K562 (cell line): ENCODE measurements at regions of chr18 and their contacts with region 1.

Region 1: DNA sequence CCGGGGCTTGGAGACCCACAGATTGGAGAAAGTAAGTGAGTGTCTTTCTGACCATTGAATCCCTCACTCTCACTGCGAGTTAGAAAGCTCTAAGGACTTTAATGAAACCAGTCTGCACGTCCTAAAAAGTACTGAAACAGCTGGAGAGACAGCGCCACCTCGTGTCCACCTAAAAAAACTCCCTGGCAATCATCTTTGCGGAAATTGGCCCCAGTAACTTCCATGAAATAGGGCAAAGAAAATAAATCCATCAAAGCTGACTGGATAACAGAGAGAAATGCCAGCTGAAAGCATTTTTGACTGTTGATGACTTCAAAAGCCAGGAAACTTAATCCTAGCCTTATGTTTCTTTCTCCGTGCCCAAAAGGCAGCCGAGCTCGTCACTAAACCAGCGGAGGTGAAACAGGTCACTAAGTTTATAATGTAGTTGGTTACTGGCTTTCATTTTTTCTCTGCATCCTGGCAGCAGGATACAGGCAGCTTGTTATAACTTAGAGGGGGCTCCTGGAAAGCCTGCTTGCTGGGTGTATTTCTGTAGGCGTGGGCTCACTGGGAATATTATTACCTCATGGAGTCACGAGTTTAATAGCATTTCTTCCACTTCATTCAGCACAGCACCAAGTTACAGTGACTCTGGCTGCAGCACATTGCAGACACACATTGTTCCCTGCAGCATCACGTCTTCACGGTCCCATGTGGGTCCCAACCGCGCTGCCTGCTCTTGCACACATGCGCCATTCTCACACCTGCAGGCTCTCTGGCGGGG is 266.5 kb downstream of the HRH4 start:
- DNase-seq: peak; percentile 39 to 78 (median 45)
- ATAC-seq: peak; percentile 84
- H3K4me3 ChIP-seq: no peak overlapping the region
- H3K27ac ChIP-seq: no peak overlapping the region
- H3K4me1 ChIP-seq: no peaks in the 10 kb centered on the region
- H3K27me3 ChIP-seq: no peaks in the 10 kb centered on the region; a peak in 2 of 5 replicates
- CTCF ChIP-seq: peak; percentile 61 to 88 (median 85)
- EP300 ChIP-seq: no peak
- POLR2A ChIP-seq: no peak
- RAD21 ChIP-seq: peak; percentile 68 to 79

Region 2: DNA sequence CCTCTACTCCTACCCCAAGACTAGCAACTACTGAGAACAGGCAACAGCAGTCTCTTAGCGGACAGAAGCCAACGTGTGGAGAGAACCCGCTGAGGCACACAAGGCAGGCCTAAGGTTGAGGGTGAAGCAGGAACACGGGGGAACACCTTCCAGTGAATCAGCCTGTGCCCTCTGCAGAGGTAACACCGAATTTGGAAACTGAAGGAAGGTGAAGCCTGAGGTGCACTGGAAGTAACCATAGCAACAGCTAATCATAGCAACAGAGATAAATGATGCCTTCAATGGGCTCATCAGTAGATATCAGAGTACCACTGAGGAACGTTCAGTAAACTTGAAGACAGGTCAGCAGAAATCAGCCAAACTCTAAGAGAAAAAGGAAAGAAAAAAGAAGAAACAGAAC is 372.6 kb before region 1 on chr18:
- CTCF ChIA-PET with region 1: interaction called, 7 read pairs
- POLR2A ChIA-PET with region 1: no interaction called
- in situ Hi-C with region 1: loop called (anchors 10 kb)
- intact Hi-C with region 1: loop called (anchors 1 kb)
- DNase-seq: no peak
- ATAC-seq: no peak
- H3K4me3 ChIP-seq: no peak overlapping the region
- H3K27ac ChIP-seq: no peak overlapping the region
- H3K4me1 ChIP-seq: no peaks in the 10 kb centered on the region
- H3K27me3 ChIP-seq: no peaks in the 10 kb centered on the region
- CTCF ChIP-seq: no peak
- EP300 ChIP-seq: no peak
- POLR2A ChIP-seq: no peak
- RAD21 ChIP-seq: no peak

Region 3: GRCh38 chr18:24362758-24363157 is 364.2 kb before region 1 on chr18:
- CTCF ChIA-PET with region 1: interaction called, 7 read pairs
- POLR2A ChIA-PET with region 1: no interaction called
- in situ Hi-C with region 1: loop called (anchors 10 kb)
- intact Hi-C with region 1: loop called (anchors 1 kb)
- DNase-seq: no peak
- ATAC-seq: no peak
- H3K4me3 ChIP-seq: no peak overlapping the region
- H3K27ac ChIP-seq: no peak overlapping the region
- H3K4me1 ChIP-seq: no peaks in the 10 kb centered on the region
- H3K27me3 ChIP-seq: peaks cover 0 to 7% of the 10 kb centered on the region in 2 experiments; a peak in 1 of 5 replicates
- CTCF ChIP-seq: no peak
- EP300 ChIP-seq: no peak
- POLR2A ChIP-seq: no peak
- RAD21 ChIP-seq: no peak

Region 4: GRCh38 chr18:24488824-24489493 is 238.0 kb before region 1 on chr18:
- CTCF ChIA-PET with region 1: interaction called, 8 read pairs
- POLR2A ChIA-PET with region 1: no interaction called
- in situ Hi-C with region 1: no loop called
- intact Hi-C with region 1: loop called (anchors 1 kb)
- DNase-seq: peak; percentile 60 to 62 (median 62)
- ATAC-seq: peak; percentile 61
- H3K4me3 ChIP-seq: no peak overlapping the region
- H3K27ac ChIP-seq: no peak overlapping the region
- H3K4me1 ChIP-seq: no peaks in the 10 kb centered on the region
- H3K27me3 ChIP-seq: peaks cover 0 to 15% of the 10 kb centered on the region in 2 experiments; a peak in 1 of 5 replicates
- CTCF ChIP-seq: peak; percentile 55 to 87 (median 63); a peak in 4 of 6 replicates
- EP300 ChIP-seq: no peak
- POLR2A ChIP-seq: no peak
- RAD21 ChIP-seq: peak; percentile 63 to 79

Region 5: DNA sequence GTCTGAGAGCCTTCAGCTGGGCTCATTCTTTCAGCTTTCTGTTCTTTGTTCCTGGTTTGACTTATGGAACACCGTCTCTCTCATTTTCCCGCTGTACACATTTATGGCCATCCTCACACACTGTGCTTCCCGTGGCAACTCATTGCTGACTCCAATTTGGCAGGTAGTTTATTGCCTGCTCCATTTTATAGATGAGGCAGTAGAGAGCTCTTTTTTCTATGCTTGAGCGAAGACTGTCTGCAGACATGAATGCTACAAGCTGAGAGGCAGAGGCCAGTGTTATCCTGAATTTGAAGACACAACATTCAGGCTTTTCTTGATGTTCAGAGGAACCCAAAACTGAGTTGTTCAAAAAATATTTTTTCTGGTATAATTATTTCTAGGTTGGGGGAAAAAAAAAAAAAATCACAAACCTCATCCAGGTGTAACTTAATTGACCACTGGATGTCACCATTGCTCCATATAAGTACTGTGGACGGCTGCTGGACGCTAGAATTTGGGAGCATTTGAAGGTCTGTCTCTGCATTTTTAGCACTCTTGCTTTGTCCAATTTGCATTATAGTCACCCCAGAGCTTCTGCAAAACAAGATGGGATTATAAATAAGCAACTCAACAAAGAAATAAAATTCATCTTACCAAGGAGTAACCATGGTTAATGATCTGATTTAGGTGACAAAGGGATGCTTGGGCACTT is 183.0 kb before region 1 on chr18:
- CTCF ChIA-PET with region 1: interaction called, 5 read pairs
- POLR2A ChIA-PET with region 1: no interaction called
- in situ Hi-C with region 1: no loop called
- intact Hi-C with region 1: loop called (anchors 1 kb)
- DNase-seq: peak; percentile 40 to 49 (median 44)
- ATAC-seq: peak; percentile 68
- H3K4me3 ChIP-seq: no peak overlapping the region
- H3K27ac ChIP-seq: no peak overlapping the region
- H3K4me1 ChIP-seq: no peaks in the 10 kb centered on the region
- H3K27me3 ChIP-seq: no peaks in the 10 kb centered on the region
- CTCF ChIP-seq: peak; percentile 39 to 62 (median 51); a peak in 4 of 6 replicates
- EP300 ChIP-seq: no peak
- POLR2A ChIP-seq: no peak
- RAD21 ChIP-seq: peak; percentile 45 to 47; a peak in 3 of 4 replicates

Region 6: GRCh38 chr18:24600076-24600654 is 126.7 kb before region 1 on chr18:
- CTCF ChIA-PET with region 1: interaction called, 17 read pairs
- POLR2A ChIA-PET with region 1: no interaction called
- in situ Hi-C with region 1: no loop called
- intact Hi-C with region 1: loop called (anchors 1 kb)
- DNase-seq: peak; percentile 28 to 50 (median 33)
- ATAC-seq: peak; percentile 72
- H3K4me3 ChIP-seq: no peak overlapping the region
- H3K27ac ChIP-seq: no peak overlapping the region
- H3K4me1 ChIP-seq: no peaks in the 10 kb centered on the region
- H3K27me3 ChIP-seq: no peaks in the 10 kb centered on the region
- CTCF ChIP-seq: peak in 2 of 3 experiments; percentile 46 to 52; a peak in 3 of 6 replicates
- EP300 ChIP-seq: no peak
- POLR2A ChIP-seq: no peak
- RAD21 ChIP-seq: peak; percentile 55 to 68

Region 7: GRCh38 chr18:24791751-24792560 is 65.0 kb after region 1 on chr18:
- CTCF ChIA-PET with region 1: no interaction called
- POLR2A ChIA-PET with region 1: no interaction called
- in situ Hi-C with region 1: no loop called
- intact Hi-C with region 1: no loop called
- DNase-seq: no peak
- ATAC-seq: no peak
- H3K4me3 ChIP-seq: no peak overlapping the region
- H3K27ac ChIP-seq: no peak overlapping the region
- H3K4me1 ChIP-seq: no peaks in the 10 kb centered on the region
- H3K27me3 ChIP-seq: no peaks in the 10 kb centered on the region
- CTCF ChIP-seq: no peak
- EP300 ChIP-seq: no peak
- POLR2A ChIP-seq: no peak
- RAD21 ChIP-seq: no peak

Region 8: GRCh38 chr18:24923138-24923537 is 196.2 kb after region 1 on chr18:
- CTCF ChIA-PET with region 1: no interaction called
- POLR2A ChIA-PET with region 1: no interaction called
- in situ Hi-C with region 1: no loop called
- intact Hi-C with region 1: no loop called
- DNase-seq: no peak
- ATAC-seq: no peak
- H3K4me3 ChIP-seq: no peak overlapping the region
- H3K27ac ChIP-seq: no peak overlapping the region
- H3K4me1 ChIP-seq: no peaks in the 10 kb centered on the region
- H3K27me3 ChIP-seq: no peaks in the 10 kb centered on the region; a peak in 1 of 5 replicates
- CTCF ChIP-seq: no peak
- EP300 ChIP-seq: no peak
- POLR2A ChIP-seq: no peak
- RAD21 ChIP-seq: no peak